Upper lobe of right lung (tissue), 1 donor: ENCODE measurements at regions of chr12 and their contacts with region 1.

Region 1: GRCh38 chr12:52884526-52885293 is 20.2 kb downstream of the KRT8 start:
- DNase-seq: peak; percentile 90
- ATAC-seq: peak; percentile 94
- H3K4me3 ChIP-seq: no peak overlapping the region
- H3K27ac ChIP-seq: no peak overlapping the region
- H3K4me1 ChIP-seq: peaks cover 1% of the 10 kb centered on the region
- H3K27me3 ChIP-seq: peaks cover 7% of the 10 kb centered on the region
- CTCF ChIP-seq: peak; percentile 97

Region 2: DNA sequence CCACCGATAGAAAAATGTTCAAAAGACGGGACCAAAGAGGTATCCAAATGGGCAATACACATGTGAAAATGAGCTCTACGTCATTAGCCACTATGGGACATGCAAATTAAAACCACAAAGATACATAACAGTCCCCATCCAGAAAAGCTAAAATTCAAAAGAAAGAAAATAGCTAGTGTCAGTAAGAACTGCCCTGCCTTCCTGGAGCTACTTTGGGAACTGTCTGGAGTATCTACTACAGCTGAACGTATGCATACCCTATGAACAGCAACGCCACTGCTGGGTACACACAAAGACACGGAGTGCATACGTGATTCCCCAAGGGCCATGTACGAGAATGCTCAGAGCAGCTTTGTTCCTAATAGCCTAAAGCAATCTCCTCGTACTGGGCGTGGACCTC is 155.6 kb before region 1 on chr12:
- intact Hi-C with region 1: no loop called
- DNase-seq: no peak
- ATAC-seq: no peak
- H3K4me3 ChIP-seq: no peak overlapping the region
- H3K27ac ChIP-seq: no peak overlapping the region
- H3K4me1 ChIP-seq: no peaks in the 10 kb centered on the region
- H3K27me3 ChIP-seq: peaks cover 12% of the 10 kb centered on the region
- CTCF ChIP-seq: no peak

Region 3: GRCh38 chr12:52980693-52981423 is 96.1 kb after region 1 on chr12:
- intact Hi-C with region 1: loop called (anchors 5 kb)
- DNase-seq: peak; percentile 87
- ATAC-seq: peak; percentile 98
- H3K4me3 ChIP-seq: no peak overlapping the region
- H3K27ac ChIP-seq: no peak overlapping the region
- H3K4me1 ChIP-seq: no peaks in the 10 kb centered on the region
- H3K27me3 ChIP-seq: no peaks in the 10 kb centered on the region
- CTCF ChIP-seq: peak; percentile 97

Region 4: DNA sequence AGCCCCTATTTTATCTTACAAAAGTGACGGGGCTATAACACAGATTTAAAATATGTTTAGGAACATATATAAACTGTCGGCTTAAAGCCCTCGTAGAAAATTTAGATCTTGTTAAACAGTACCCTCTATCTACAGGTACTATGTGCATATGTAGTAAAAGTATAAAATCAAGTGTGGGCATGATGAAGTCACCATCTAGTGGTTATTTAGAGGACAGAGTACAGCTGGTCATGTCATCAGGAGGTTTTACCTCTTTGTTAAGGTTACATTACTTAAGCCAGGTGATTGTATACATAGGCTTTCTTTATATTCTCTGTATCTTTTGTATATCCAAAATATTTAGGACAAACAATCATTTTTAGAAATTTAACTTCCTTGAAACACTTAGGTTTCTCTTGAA is 146.9 kb after region 1 on chr12:
- intact Hi-C with region 1: no loop called
- DNase-seq: no peak
- ATAC-seq: no peak
- H3K4me3 ChIP-seq: no peak overlapping the region
- H3K27ac ChIP-seq: no peak overlapping the region
- H3K4me1 ChIP-seq: no peaks in the 10 kb centered on the region
- H3K27me3 ChIP-seq: no peaks in the 10 kb centered on the region
- CTCF ChIP-seq: no peak